ENCODE measurements at regions of chr11 and their contacts with region 1.

Region 1: DNA sequence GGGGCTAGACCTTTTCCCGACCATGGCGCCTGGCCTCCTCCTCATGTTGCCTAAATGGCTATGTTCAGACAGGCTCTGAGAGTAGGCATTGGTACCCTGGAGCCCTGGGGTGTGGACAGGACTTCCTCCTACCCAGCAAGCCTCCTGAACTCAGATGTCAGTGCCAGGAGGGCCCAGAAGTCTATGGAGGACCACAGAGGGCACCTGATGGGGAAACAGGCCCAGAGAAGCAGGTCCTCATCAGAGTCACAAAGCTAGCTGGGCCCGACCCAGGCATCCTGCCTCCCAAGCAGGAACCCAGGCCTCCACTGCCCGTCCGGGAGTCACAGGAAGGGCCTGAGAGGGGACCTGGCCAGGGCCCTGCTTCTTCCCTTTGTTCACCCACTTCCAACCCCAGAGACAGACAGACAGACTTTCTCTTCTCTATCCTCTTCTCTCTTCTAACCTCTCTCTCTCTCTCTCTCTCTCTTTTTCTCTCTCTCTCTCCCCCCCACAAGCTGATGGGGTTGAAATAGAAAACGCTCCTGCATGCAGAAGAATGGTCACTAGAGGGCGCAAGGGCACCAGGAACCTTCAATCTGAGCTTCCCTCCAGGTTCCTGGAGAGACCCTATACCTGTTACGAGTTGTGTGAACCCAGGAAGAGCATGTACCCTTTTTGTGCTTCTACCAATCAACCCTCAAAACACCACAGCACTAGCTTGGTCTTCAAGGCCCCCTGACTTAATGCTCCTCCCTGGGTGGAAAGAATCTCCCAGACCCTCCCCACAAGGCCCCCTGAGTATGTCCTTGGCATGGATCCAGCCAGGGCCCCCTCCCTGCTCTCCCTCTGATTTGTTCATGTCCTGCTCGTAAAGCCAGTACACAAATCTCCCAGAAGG is 27.1 kb downstream of the ARAP1 start:
- DNase-seq: peak; percentile 78
- H3K27ac ChIP-seq: peak overlapping the region; percentile 97
- CTCF ChIP-seq: peak; percentile 90

Region 2: DNA sequence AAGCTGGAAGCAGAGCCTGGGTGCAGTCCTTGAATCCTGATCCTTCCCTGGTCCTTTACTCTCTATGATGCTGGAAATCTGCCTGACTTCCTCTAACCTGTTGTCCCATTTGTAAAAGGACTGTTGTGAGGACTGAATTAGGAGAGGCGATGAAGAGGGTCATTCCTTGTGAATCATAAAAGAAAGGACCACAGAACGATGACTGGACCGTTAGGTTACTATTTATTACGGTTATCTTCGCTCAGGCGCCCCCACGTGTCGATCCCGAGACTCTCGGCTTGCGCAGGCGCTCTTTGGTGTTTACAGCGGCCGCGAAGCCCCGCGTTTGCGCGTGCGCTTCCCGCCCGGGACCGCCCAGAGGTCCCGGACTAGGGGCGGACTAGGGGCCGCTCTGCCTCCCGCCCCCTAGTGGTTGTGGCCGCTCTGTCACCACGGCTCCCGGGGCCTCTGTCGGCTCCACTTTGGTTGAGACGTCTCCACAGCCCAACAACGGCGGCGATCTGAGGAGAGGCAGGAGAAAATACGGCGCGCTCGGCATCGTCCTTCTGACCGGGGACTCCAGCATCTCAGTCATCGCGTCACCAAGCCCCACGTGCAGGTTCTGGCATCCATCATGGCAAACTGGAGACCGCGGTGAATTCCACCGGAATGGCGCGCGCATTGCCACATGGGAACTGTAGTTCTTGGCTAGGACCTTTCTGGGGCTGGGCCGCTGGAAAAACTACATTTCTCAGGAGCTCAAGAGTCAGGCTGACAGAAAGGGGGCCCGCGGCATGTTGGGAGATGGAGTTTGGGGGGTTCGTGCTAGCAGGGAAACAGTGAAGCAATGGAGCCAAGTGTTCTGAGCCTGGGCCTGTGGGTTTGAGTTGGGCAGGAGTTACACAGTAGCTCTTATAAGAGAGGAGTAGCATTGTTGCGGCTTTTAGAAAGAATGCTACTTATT is 68.6 kb after region 1 on chr11 and contains the start of gene STARD10:
- CTCF ChIA-PET with region 1: interaction called, 26 read pairs
- POLR2A ChIA-PET with region 1: no interaction called
- DNase-seq: peak; percentile 98
- H3K27ac ChIP-seq: peak within 1 kb of the TSS; percentile 88
- CTCF ChIP-seq: peak; percentile 97